ENCODE measurements at regions of chr1 and their contacts with region 1.

Region 1: GRCh38 chr1:19341201-19342072 is 29.3 kb downstream of the SLC66A1 start:
- DNase-seq: peak; percentile 76 to 85 (median 82)
- ATAC-seq: peak; percentile 80
- H3K4me3 ChIP-seq: no peak overlapping the region
- H3K4me1 ChIP-seq: no peaks in the 10 kb centered on the region
- CTCF ChIP-seq: peak; percentile 85

Region 2: DNA sequence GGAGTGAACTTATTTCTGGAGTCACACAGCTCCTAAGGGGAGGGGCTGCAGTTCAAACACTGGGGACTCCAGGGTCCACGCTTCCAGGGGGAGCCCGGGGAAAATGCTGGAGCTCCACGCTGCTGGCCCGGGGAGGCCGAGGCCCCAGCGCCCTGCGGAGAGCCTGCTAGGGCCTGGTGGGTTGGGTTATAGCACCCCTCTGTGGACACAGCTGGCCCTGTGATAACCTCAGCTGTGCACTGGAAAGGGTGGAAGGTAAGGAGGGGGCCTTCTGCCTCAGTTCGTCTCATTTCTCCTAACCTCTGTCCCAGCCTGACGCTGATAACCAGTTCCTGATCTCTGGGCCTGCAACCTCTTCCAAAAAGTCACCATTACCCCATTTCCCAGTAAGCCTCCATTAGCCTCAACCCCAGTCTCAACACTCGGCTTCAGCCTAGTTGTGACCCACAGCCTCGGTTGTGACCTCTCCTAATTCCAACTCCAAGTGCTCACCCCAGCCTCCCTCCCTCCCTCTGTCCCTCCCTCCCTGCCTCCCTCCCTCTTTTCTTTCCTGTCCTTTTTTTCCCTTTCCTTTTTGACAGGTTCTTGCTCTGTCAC is 309.8 kb after region 1 on chr1:
- intact Hi-C with region 1: loop called in 1 of 2 experiments (anchors 10 kb)
- DNase-seq: peak in 1 of 3 donors; percentile 61
- ATAC-seq: peak; percentile 38
- H3K4me3 ChIP-seq: no peak overlapping the region
- H3K4me1 ChIP-seq: peaks cover 45% of the 10 kb centered on the region
- CTCF ChIP-seq: no peak